CD8-positive, alpha-beta memory T cell (primary cell): ENCODE measurements at regions of chr1 and their contacts with region 1.

Region 1: GRCh38 chr1:210342986-210343780 is 14.5 kb downstream of the HHAT start:
- DNase-seq: no peak
- H3K4me3 ChIP-seq: no peak overlapping the region
- H3K4me3 Mint-ChIP-seq: no peak overlapping the region
- H3K27ac ChIP-seq: no peak overlapping the region
- H3K27ac Mint-ChIP-seq: no peak overlapping the region
- H3K4me1 ChIP-seq: peaks cover 34% of the 10 kb centered on the region
- H3K4me1 Mint-ChIP-seq: peaks cover 11 to 28% (median 12%) of the 10 kb centered on the region in 3 donors
- H3K27me3 ChIP-seq: no peaks in the 10 kb centered on the region
- H3K27me3 Mint-ChIP-seq: no peaks in the 10 kb centered on the region

Region 2: GRCh38 chr1:210143465-210144062 is 199.6 kb before region 1 on chr1:
- CTCF ChIA-PET with region 1: no interaction called
- POLR2A ChIA-PET with region 1: no interaction called
- DNase-seq: peak in 1 of 5 donors; percentile 3
- H3K4me3 ChIP-seq: no peak overlapping the region
- H3K4me3 Mint-ChIP-seq: no peak overlapping the region
- H3K27ac ChIP-seq: no peak overlapping the region
- H3K27ac Mint-ChIP-seq: no peak overlapping the region
- H3K4me1 ChIP-seq: no peaks in the 10 kb centered on the region
- H3K4me1 Mint-ChIP-seq: no peaks in the 10 kb centered on the region
- H3K27me3 ChIP-seq: no peaks in the 10 kb centered on the region
- H3K27me3 Mint-ChIP-seq: peaks cover 5 to 43% of the 10 kb centered on the region in 2 donors

Region 3: GRCh38 chr1:210328746-210329503 is 14.3 kb before region 1 on chr1 and contains the start of gene HHAT:
- CTCF ChIA-PET with region 1: interaction called, 17 read pairs
- POLR2A ChIA-PET with region 1: interaction called, 3 read pairs
- DNase-seq: peak; percentile 48 to 74 (median 58)
- H3K4me3 ChIP-seq: peak within 1 kb of the TSS; percentile 81
- H3K4me3 Mint-ChIP-seq: peak within 1 kb of the TSS; percentile 86 to 98 (median 97)
- H3K27ac ChIP-seq: peak within 1 kb of the TSS; percentile 79
- H3K27ac Mint-ChIP-seq: peak within 1 kb of the TSS; percentile 88 to 99 (median 96)
- H3K4me1 ChIP-seq: peaks cover 33% of the 10 kb centered on the region
- H3K4me1 Mint-ChIP-seq: peaks cover 40 to 58% (median 44%) of the 10 kb centered on the region in 3 donors
- H3K27me3 ChIP-seq: no peaks in the 10 kb centered on the region
- H3K27me3 Mint-ChIP-seq: peaks cover 0 to 4% of the 10 kb centered on the region in 2 donors
- total RNA-seq, gene HHAT: 1.4 to 2.1 TPM